ENCODE measurements at regions of chr3 and their contacts with region 1.

Region 1: GRCh38 chr3:24680214-24680967 is 185.7 kb upstream of the THRB start:
- DNase-seq: peak; percentile 63 to 90
- H3K4me3 ChIP-seq: no peak overlapping the region
- H3K4me1 ChIP-seq: no peaks in the 10 kb centered on the region; the same call in 1 of the 2 replicates
- H3K27me3 ChIP-seq: no peaks in the 10 kb centered on the region

Region 2: DNA sequence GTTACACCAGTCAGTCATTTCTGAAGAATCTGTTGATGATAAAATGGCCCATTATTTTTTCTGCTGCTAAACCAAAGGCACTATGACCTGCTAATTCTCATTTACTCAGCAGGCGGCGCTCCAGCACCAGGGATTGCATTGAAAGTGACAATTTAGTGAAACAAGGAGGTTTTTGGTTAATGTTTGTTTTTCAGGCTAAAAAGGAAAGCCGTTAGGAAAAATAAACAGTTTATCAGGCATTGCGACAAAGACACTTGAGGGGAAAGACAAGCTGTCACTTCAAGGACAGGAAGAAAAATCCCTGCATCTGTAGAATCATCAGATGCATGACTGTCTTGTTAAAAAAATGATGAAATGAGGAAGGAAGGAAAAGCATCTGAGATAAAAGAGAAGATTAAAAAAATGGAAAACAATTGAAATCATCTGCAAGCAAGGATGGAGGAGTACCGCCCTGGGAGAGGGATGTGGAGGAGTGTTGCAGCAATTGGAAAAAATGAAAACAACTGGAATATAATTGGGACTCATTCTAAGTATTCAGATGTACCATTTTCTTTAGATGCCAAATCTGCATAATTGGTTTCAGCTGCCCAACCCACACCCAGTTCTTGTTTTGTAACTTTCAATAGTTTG is 681.3 kb before region 1 on chr3:
- in situ Hi-C with region 1: loop called (anchors 10 kb)
- DNase-seq: peak; percentile 46 to 86
- H3K4me3 ChIP-seq: no peak overlapping the region
- H3K4me1 ChIP-seq: peaks cover 9% of the 10 kb centered on the region
- H3K27me3 ChIP-seq: no peaks in the 10 kb centered on the region; the same call in 1 of the 2 replicates

Region 3: GRCh38 chr3:24185738-24186384 is 494.5 kb before region 1 on chr3:
- in situ Hi-C with region 1: loop called (anchors 10 kb)
- DNase-seq: peak; percentile 63 to 68
- H3K4me3 ChIP-seq: no peak overlapping the region
- H3K4me1 ChIP-seq: no peaks in the 10 kb centered on the region
- H3K27me3 ChIP-seq: no peaks in the 10 kb centered on the region

Region 4: DNA sequence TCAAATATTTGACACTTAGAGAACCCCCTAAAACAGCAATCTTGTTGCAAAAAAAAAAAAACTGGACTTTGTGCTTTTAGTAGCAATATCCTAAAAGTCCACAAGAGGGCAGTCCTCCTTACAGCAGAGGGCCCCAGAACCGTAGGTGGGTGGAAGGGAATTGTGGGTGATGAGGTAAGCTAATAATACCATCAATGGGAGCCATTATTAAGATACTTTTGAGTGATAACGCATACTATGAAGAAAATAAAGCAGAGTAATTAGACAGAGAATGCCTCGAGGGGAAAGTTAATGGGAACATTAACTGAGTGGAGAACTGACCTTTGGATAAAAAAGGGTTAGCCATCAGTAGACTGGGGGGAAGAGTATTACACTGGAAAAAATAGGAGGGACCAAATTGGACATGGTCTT is 415.6 kb before region 1 on chr3:
- in situ Hi-C with region 1: loop called (anchors 10 kb)
- DNase-seq: peak; percentile 39 to 43
- H3K4me3 ChIP-seq: no peak overlapping the region
- H3K4me1 ChIP-seq: no peaks in the 10 kb centered on the region
- H3K27me3 ChIP-seq: no peaks in the 10 kb centered on the region